Transverse colon (tissue), 4 donors: ENCODE measurements at regions of chr11 and their contacts with region 1.

Region 1: GRCh38 chr11:63768237-63769043 is at the start of gene ZFTA:
- DNase-seq: peak; percentile 75
- H3K4me3 ChIP-seq: peak within 1 kb of the TSS; percentile 79 to 94 (median 92)
- H3K27ac ChIP-seq: peak within 1 kb of the TSS; percentile 81 to 89 (median 86)
- H3K4me1 ChIP-seq: peaks cover 25 to 53% (median 43%) of the 10 kb centered on the region in 4 donors
- H3K27me3 ChIP-seq: peaks cover 25% of the 10 kb centered on the region
- CTCF ChIP-seq: peak in 3 of 5 experiments; percentile 53 to 65 (median 62)
- EP300 ChIP-seq: no peak
- POLR2A ChIP-seq: no peak
- total RNA-seq, gene ZFTA: 4.6 to 15.7 (median 11.0) TPM

Region 2: GRCh38 chr11:63681321-63682049 is 87.0 kb before region 1 on chr11 and contains the start of gene RTN3:
- in situ Hi-C with region 1: no loop called
- intact Hi-C with region 1: loop called (anchors 10 kb)
- DNase-seq: peak; percentile 99
- H3K4me3 ChIP-seq: peak within 1 kb of the TSS; percentile 79 to 95 (median 90)
- H3K27ac ChIP-seq: peak within 1 kb of the TSS; percentile 96 to 99 (median 98)
- H3K4me1 ChIP-seq: peaks cover 7 to 26% (median 12%) of the 10 kb centered on the region in 4 donors
- H3K27me3 ChIP-seq: no peaks in the 10 kb centered on the region
- CTCF ChIP-seq: peak in 1 of 5 experiments; percentile 20
- EP300 ChIP-seq: no peak
- POLR2A ChIP-seq: peak; percentile 98
- total RNA-seq, gene RTN3: 44.8 to 187 (median 117) TPM

Region 3: GRCh38 chr11:63813035-63813562 is 44.7 kb after region 1 on chr11 and contains the start of gene SPINDOC:
- in situ Hi-C with region 1: no loop called
- intact Hi-C with region 1: loop called (anchors 5 kb)
- DNase-seq: peak; percentile 82
- H3K4me3 ChIP-seq: peak within 1 kb of the TSS; percentile 71 to 87 (median 79)
- H3K27ac ChIP-seq: peak within 1 kb of the TSS; percentile 77 to 87 (median 82)
- H3K4me1 ChIP-seq: peaks cover 12 to 23% (median 20%) of the 10 kb centered on the region in 4 donors
- H3K27me3 ChIP-seq: no peaks in the 10 kb centered on the region
- CTCF ChIP-seq: no peak
- EP300 ChIP-seq: no peak
- POLR2A ChIP-seq: no peak
- total RNA-seq, gene SPINDOC: 1.5 to 9.8 (median 5.2) TPM

Region 4: DNA sequence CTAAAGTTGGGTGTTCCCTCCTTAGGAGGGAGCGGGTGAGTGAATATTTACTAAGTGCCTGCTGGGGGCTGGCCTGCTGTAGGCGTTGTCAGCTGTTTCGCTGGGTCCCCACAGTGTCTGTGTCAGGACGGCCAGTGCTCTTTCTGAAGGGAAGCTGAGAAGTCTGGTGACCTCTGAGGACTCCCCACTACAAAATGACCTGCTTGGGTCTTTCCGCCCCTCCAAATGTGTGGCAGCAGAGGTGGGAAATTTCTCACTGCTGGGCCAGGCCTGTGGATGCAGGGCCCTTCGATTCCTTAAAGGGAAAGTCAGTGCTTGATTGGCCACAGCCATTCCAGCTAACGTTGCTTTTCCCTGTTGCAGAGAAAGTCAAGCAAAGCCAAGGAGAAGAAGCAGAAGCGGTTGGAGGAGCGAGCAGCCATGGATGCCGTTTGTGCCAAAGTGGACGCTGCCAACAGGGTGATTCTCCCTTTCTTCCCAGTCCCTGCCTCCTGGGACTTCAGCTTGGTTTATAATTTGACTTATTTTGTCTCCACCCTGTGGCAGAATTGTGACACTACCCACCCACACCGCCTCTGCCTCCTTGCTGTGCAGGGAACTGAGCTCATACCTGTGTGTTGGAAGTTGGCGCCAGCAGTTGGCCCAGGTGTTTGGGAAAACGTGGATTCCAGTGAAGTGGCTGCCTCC is 177.2 kb after region 1 on chr11:
- in situ Hi-C with region 1: loop called in 1 of 4 experiments (anchors 10 kb)
- intact Hi-C with region 1: loop called (anchors 2 kb)
- DNase-seq: peak; percentile 75
- H3K4me3 ChIP-seq: no peak overlapping the region
- H3K27ac ChIP-seq: peak overlapping the region; percentile 21 to 73 (median 60)
- H3K4me1 ChIP-seq: peaks cover 12 to 45% (median 13%) of the 10 kb centered on the region in 4 donors
- H3K27me3 ChIP-seq: no peaks in the 10 kb centered on the region
- CTCF ChIP-seq: peak; percentile 72 to 93 (median 73)
- EP300 ChIP-seq: no peak
- POLR2A ChIP-seq: no peak